CD4-positive, alpha-beta T cell (primary cell): ENCODE measurements at regions of chr10 and their contacts with region 1.

Region 1: GRCh38 chr10:22228943-22229801 is 11.4 kb upstream of the EBLN1 start:
- DNase-seq: peak; percentile 72 to 93 (median 82)
- ATAC-seq: peak; percentile 77
- H3K4me3 ChIP-seq: peak overlapping the region; percentile 62
- H3K4me3 Mint-ChIP-seq: peak overlapping the region; percentile 92
- H3K27ac ChIP-seq: peak overlapping the region; percentile 25 to 53
- H3K27ac Mint-ChIP-seq: peak overlapping the region; percentile 99
- H3K4me1 ChIP-seq: peaks cover 3% of the 10 kb centered on the region
- H3K4me1 Mint-ChIP-seq: peaks cover 19% of the 10 kb centered on the region
- H3K27me3 ChIP-seq: no peaks in the 10 kb centered on the region
- H3K27me3 Mint-ChIP-seq: peaks cover 11% of the 10 kb centered on the region
- CTCF ChIP-seq: no peak

Region 2: DNA sequence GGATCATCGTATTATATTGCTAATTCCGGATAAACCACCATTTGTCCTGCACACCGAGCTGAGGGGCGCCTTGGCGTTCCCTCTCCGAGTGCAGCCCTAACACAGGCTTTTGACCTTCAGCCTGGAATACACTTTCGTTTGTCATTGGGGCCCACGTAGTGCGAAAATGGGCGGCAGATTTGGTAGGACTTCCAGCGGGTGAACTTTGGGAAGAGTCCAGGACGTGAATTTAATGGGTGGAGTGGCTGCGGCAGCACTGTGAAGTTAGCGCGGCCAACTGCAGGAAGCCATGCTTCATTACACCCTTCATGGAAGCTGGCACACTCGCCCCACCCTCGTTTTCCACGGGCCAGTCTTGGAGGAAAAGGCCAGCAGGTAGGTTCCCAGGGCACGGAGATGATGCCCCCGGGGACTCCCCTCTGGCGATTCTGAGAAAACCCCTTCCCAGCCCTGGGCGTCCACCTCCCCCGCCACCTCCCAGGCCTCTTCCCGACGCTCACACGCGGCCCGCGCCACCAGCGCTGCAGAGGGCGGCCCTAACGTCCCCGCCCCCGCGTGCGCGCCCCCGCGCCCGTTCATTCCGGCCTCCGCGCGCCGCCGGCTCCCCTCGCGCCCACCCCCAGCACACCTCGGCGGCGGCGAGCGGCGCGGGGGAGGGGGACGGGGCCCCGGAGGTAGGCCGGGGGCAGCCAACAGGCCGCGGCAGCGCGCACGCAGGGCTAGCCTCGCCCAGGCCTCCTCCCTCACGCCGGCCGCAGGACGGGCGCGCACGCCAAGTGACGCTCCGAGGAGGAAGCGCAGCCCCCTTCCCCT is 695.5 kb before region 1 on chr10 and contains the start of gene MLLT10:
- CTCF ChIA-PET with region 1: interaction called, 3 read pairs
- POLR2A ChIA-PET with region 1: interaction called, 11 read pairs
- intact Hi-C with region 1: loop called in 1 of 2 experiments (anchors 10 kb)
- DNase-seq: peak; percentile 81 to 98 (median 92)
- ATAC-seq: peak; percentile 83
- H3K4me3 ChIP-seq: peak within 1 kb of the TSS; percentile 85
- H3K4me3 Mint-ChIP-seq: peak within 1 kb of the TSS; percentile 96
- H3K27ac ChIP-seq: peak within 1 kb of the TSS; percentile 81 to 83
- H3K27ac Mint-ChIP-seq: peak within 1 kb of the TSS; percentile 90
- H3K4me1 ChIP-seq: peaks cover 19% of the 10 kb centered on the region
- H3K4me1 Mint-ChIP-seq: peaks cover 29% of the 10 kb centered on the region
- H3K27me3 ChIP-seq: no peaks in the 10 kb centered on the region
- H3K27me3 Mint-ChIP-seq: no peaks in the 10 kb centered on the region
- CTCF ChIP-seq: peak; percentile 30
- total RNA-seq, gene MLLT10: 46.0 to 64.1 TPM

Region 3: DNA sequence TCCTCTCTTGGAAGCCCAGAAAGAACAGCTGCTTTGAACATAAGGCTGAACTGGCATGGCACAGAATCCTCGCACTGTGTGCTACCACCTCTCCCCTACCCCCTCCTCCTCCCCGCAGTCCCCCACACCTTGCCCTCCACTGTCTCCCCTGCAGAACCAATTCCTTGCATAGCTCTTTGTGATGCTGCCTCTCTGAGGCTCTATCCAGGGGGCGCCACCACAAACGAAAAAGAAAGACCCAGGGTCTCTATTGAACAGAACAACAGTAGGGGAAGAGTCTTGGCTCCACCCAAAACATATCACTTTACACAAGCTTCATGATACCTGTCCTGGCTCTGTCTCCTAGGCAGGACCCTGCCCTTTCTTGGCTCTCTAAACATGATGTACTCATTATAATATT is 14.8 kb after region 1 on chr10:
- CTCF ChIA-PET with region 1: interaction called, 6 read pairs
- POLR2A ChIA-PET with region 1: interaction called, 18 read pairs
- intact Hi-C with region 1: loop called in 1 of 2 experiments (anchors 1 kb)
- DNase-seq: peak in 4 of 14 experiments; percentile 10 to 38 (median 18)
- ATAC-seq: no peak
- H3K4me3 ChIP-seq: no peak overlapping the region
- H3K4me3 Mint-ChIP-seq: no peak overlapping the region
- H3K27ac ChIP-seq: no peak overlapping the region
- H3K27ac Mint-ChIP-seq: no peak overlapping the region
- H3K4me1 ChIP-seq: no peaks in the 10 kb centered on the region
- H3K4me1 Mint-ChIP-seq: peaks cover 19% of the 10 kb centered on the region
- H3K27me3 ChIP-seq: peaks cover 7% of the 10 kb centered on the region in 2 experiments
- H3K27me3 Mint-ChIP-seq: peaks cover 6% of the 10 kb centered on the region
- CTCF ChIP-seq: no peak

Region 4: DNA sequence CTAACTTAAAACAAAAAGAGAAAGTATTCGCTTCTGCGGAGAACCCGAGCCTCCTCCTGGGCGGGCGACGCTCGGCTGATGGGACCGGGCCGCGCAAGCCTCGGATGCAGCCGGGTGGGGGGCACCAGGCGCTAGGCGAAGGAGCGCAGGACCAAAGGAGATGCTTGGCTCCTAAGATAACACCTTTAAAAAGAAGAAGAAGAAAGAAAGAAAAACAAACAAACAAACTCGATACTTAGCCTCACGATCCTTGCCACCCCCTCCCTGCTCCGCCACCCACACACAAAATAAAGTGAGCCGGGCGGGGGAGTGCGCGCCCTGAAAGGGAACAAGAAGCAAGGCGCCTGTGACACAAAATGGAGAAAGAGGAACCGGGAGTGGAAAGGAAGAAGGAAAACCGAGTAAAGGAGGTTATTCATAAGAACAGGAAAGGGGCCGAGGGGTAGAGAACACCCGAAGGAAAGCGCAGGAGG is 22.6 kb after region 1 on chr10:
- CTCF ChIA-PET with region 1: no interaction called
- POLR2A ChIA-PET with region 1: interaction called, 77 read pairs
- intact Hi-C with region 1: loop called (anchors 1 to 2 kb)
- DNase-seq: peak; percentile 46 to 82 (median 66)
- ATAC-seq: peak; percentile 57
- H3K4me3 ChIP-seq: peak overlapping the region; percentile 76
- H3K4me3 Mint-ChIP-seq: peak overlapping the region; percentile 96
- H3K27ac ChIP-seq: peak overlapping the region; percentile 71 to 76
- H3K27ac Mint-ChIP-seq: peak overlapping the region; percentile 97
- H3K4me1 ChIP-seq: peaks cover 10% of the 10 kb centered on the region
- H3K4me1 Mint-ChIP-seq: peaks cover 56% of the 10 kb centered on the region
- H3K27me3 ChIP-seq: peaks cover 0 to 7% of the 10 kb centered on the region in 2 experiments
- H3K27me3 Mint-ChIP-seq: peaks cover 22% of the 10 kb centered on the region
- CTCF ChIP-seq: no peak

Region 5: GRCh38 chr10:22340362-22341189 is 111.4 kb after region 1 on chr10:
- CTCF ChIA-PET with region 1: interaction called, 4 read pairs
- POLR2A ChIA-PET with region 1: interaction called, 8 read pairs
- intact Hi-C with region 1: loop called in 1 of 2 experiments (anchors 5 kb)
- DNase-seq: peak in 10 of 14 experiments; percentile 12 to 78 (median 49)
- ATAC-seq: peak; percentile 37
- H3K4me3 ChIP-seq: peak overlapping the region; percentile 67
- H3K4me3 Mint-ChIP-seq: peak overlapping the region; percentile 91
- H3K27ac ChIP-seq: no peak overlapping the region
- H3K27ac Mint-ChIP-seq: peak overlapping the region; percentile 89
- H3K4me1 ChIP-seq: peaks cover 38% of the 10 kb centered on the region
- H3K4me1 Mint-ChIP-seq: peaks cover 38% of the 10 kb centered on the region
- H3K27me3 ChIP-seq: peaks cover 61 to 98% of the 10 kb centered on the region in 2 experiments
- H3K27me3 Mint-ChIP-seq: peaks cover 86% of the 10 kb centered on the region
- CTCF ChIP-seq: no peak